Ovary (tissue), 10 donors: ENCODE measurements at regions of chr16 and their contacts with region 1.

Region 1: DNA sequence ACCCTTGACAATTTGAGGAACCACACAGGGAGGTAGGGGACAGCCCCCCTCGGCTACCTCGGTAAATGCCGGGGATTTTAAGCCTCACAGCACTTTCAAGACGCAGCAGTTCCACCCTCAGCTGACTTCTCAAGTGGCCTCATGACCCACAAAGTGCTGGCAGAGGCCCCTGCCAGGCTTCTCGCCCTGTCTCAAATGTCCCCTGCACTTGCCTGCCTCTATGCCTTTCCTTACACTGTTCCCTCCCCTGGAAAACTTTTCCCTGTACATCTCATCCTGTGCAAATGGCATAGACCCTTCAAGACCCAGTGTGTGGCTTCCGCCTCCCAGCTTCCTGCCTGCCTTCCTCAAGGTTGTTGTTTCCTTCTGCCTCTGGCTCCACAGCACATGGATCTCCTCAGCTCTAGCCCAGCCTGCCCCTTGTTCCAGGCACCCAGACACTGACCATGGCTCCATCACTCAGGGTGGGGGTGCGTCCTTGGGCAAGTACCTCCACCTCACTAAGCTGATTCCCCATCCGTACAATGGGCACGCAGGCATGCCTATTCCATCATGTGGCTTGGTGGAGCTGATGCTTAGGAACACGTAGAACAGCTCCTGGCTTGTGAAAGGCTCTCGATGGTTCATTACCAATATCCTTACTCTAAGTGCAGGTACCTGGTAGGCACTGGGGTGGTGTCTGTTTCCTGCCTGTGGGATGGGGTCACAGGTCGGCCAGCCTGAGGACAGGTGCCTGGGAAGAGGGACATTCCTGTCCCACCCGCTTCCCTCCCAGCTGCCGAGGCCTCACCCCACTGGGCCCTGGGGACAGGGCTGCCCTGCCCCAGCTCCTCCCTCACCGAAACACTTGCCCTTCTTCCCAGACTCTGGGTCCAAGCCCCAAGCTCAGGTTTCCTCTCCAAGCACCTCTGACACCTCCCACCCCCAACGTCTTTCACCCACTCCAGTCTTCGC is 24.0 kb downstream of the MMP15 start:
- DNase-seq: no peak
- H3K4me3 ChIP-seq: no peak overlapping the region
- H3K27ac ChIP-seq: no peak overlapping the region
- H3K4me1 ChIP-seq: no peaks in the 10 kb centered on the region
- H3K27me3 ChIP-seq: no peaks in the 10 kb centered on the region
- CTCF ChIP-seq: no peak
- EP300 ChIP-seq: no peak
- POLR2A ChIP-seq: no peak

Region 2: DNA sequence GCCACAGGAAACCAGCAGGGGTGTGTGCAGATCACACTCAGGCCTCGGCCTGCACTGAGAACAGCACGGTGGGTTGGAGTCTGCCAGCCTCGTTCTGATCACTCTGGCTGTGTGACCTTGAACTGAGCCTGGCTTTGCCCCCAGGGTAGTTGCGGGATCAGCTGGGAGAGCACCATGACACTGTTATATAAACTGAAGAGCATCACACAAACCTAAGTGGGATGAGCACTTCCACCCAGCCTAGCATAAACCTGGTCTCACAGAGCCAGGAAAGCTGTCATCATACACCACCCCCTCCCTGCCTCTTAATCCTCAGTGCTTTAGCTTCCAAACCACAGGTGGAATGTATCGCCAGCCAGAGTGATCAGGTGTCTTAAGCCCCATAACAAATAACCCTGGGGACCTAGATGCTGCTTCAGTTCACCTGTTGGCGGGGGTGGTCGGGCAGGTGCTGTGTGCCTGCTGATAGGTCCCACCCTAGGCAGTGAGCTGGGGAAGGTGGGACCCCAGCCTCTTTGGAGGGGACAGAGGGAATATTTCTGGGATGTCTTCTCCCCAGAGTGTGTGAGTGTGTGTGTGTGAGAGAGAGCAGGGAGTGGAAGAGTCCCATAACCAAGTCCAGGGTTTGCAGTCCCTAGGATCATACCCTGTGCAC is 421.9 kb after region 1 on chr16:
- intact Hi-C with region 1: loop called in 1 of 4 experiments (anchors 10 kb)
- DNase-seq: no peak
- H3K4me3 ChIP-seq: no peak overlapping the region
- H3K27ac ChIP-seq: no peak overlapping the region
- H3K4me1 ChIP-seq: no peaks in the 10 kb centered on the region
- H3K27me3 ChIP-seq: no peaks in the 10 kb centered on the region
- CTCF ChIP-seq: no peak
- EP300 ChIP-seq: no peak
- POLR2A ChIP-seq: no peak